ENCODE measurements at regions of chr10 and their contacts with region 1.

Region 1: GRCh38 chr10:100338434-100339036 is 8.5 kb upstream of the SCD start:
- DNase-seq: peak; percentile 80
- CTCF ChIP-seq: peak; percentile 80

Region 2: DNA sequence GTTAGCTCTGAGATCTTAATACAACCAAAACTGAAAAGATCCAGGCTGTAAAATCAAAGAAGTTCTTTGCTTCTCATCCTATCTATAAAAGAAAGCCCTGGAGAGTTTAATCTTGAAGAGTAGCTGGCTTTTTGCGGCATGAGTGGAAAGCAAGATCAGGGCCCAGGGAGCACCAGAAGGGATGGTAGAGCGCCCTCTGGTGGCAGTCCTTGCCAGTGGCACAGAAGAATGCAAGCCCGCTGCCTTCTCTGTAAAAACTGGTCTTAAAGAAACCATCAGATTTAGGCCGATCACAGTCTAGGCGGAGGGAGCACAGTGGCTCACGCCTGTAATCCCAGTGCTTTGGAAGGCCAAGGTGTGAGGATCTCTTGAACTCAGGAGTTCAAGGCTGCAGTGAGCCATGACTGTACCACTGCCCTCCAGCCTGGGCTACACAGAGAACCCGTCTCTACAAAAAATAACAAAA is 292.5 kb before region 1 on chr10:
- in situ Hi-C with region 1: no loop called
- DNase-seq: peak; percentile 71
- CTCF ChIP-seq: peak; percentile 94

Region 3: GRCh38 chr10:100209303-100209702 is 129.2 kb before region 1 on chr10:
- in situ Hi-C with region 1: no loop called
- DNase-seq: no peak
- CTCF ChIP-seq: no peak

Region 4: GRCh38 chr10:100282907-100283306 is 55.6 kb before region 1 on chr10:
- in situ Hi-C with region 1: no loop called
- DNase-seq: no peak
- CTCF ChIP-seq: no peak

Region 5: GRCh38 chr10:100433253-100434240 is 95.0 kb after region 1 on chr10:
- in situ Hi-C with region 1: loop called (anchors 5 kb)
- DNase-seq: peak; percentile 84
- CTCF ChIP-seq: peak; percentile 98